Posterior cingulate gyrus (tissue), 11 donors: ENCODE measurements at regions of chr15 and their contacts with region 1.

Region 1: GRCh38 chr15:78308422-78309032 is 9.1 kb upstream of the SKIC8 start:
- DNase-seq: peak; percentile 66 to 97 (median 85)

Region 2: DNA sequence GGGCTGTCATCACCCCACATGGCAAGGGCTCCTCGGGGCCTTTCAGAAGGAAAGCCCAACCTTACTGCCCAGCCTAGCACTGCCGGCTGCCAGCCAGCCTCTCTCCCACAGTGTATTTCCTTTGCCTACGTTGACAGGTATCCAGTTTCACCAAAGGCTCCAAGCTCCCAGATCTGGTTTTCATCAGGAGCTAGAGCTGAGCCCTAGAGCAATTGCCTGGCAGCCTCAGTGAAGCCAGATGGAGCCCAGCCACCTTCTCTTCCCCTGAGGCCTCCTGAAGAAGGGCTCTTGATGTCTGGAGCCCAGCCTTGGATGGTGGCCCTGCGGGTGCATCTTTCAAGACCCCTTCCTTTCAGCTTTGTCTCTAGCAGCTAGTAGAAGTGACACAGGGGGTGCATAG is 51.9 kb after region 1 on chr15:
- intact Hi-C with region 1: no loop called
- DNase-seq: no peak

Region 3: GRCh38 chr15:78415286-78415685 is 106.8 kb after region 1 on chr15:
- intact Hi-C with region 1: loop called (anchors 2 kb)
- DNase-seq: no peak

Region 4: DNA sequence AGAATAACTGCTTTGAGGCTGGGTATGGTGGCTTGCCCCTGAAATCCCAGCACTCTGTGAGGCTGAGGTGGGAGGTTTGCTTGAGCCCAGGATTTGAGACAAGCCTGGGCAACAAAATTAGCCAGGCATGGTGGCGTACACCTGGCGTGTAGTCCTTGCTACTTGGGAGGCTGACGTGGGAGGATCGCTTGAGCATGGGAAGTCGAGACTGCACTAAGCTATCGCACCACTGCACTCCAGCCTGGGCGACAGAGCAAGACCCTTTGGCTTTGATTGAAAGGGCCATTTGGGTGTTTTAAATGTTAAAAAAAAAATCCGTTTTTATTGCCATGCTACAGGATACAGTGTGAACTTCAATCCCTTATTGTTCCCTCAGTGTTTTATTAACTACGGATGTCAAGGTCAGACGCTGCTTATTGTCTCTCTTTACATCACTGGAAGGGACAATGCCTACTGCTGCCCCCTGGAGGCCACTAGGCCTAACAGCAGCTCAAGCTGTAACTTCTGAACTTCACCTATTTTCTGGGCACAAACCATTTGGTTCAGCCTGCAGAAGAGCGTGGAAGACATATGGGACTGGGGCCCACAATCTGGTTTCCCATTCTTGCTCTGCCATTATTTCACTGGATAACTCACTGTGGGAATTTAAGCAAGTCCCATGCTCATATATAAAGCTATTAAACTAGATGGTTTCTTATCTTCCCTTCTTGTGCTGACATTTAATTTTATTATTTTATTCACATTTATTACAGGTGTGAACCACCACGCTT is 114.2 kb after region 1 on chr15:
- intact Hi-C with region 1: loop called (anchors 1 kb)
- DNase-seq: peak; percentile 36 to 95 (median 70)

Region 5: DNA sequence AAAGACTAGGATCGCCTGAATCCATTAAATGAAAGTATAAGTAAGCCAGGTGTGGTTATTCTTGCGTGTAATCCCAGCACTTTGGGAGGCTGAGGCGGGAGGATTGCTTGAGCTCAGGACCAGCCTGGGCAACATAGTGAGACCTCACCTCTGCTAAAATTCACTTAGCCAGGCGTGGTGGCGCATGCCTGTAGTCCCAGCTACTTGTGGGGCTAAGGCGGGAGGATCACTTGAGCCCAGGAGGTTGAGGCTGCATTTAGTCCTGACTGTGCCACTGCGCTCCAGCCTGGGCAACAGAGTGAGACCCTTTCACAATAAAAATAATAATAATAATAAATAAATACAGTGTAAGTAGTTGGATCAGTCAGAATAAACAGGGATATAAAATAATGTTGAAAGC is 173.4 kb after region 1 on chr15:
- intact Hi-C with region 1: loop called (anchors 2 kb)
- DNase-seq: no peak